ENCODE measurements at regions of chr11 and their contacts with region 1.

Region 1: DNA sequence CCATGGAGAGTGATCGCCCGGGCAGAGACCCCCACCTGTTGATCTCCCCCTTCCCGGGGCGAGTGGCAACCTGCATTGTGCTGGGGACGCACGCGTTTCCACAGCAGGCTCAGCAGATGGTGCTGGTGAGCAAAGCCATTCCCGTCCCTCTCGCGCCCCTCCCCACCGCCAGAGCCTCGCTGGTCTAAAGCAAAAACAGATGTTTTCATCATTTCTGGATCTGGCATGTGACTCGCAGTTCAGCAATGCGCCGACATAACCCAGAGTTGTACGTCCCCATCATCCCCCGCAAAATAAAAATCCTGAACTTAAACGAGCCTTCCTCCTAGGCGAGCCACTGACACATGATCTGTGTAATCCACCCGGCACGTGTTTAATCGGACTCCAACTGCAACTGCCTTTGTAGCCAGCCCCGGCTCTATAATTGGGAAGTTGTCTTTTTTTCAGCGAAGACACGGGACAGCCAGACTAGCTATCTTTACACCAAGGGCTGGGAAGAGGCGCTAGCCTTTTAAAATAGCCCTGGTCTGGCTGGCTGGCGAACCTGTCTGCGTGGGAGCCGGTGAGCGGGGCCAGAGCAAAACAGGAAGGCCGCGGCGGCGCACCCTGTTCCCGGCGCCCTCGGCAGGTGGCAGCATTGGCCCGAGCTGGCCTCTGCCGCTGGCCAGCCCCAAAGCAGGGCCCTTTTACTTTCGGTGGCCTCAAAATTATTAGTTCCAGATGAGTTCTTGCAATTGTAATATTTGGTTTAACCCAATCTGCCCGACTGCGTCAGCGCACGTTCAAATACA is 203.0 kb upstream of the SORL1-AS1 start:
- DNase-seq: peak; percentile 78
- H3K4me3 Mint-ChIP-seq: peak overlapping the region; percentile 68
- H3K27ac Mint-ChIP-seq: peak overlapping the region; percentile 49
- H3K4me1 Mint-ChIP-seq: peaks cover 26% of the 10 kb centered on the region
- H3K27me3 Mint-ChIP-seq: peaks cover 25% of the 10 kb centered on the region

Region 2: DNA sequence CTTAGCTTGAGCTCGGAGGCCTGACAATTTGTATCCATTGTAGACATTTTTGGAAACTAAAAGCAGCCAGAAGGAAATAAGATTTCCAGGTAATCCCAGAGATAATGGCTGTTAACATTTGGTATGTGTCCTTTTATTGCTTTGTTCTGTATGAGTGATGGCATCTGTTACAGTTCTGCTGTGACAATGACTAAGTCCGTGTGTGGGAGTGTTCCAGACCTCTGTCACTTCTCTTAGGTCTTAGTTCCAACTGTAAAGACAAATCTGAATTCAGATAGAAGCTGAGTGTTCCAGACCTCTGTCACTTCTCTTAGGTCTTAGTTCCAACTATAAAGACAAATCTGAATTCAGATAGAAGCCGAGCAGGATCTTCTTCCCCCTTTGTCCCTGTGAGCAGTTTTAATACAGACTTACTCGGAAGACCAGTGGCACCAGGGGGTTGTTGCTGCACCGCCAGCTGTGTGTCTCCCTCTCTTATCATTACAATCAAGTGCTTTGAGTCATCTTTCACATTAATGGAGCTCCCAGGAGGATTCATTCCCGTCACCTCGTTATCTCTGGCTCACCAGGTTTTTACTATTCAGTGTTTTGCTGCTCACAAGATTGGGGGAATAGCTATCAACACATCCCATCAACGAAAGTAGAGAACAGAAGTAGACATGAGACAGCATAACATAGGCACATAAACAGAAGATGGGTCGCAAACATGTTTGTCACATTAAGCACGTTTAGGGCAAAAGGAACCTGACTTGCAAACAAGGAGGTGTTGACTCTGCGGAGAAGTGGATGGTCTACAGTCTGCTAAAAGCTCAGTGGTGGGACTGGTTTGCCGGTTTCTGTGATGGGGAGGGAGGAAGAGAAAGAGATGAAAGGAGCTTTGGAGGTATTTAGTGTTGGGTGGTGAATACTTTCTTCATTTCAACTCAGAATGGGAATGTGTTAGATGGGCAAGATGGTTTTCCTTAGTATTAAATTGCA is 11.9 kb before region 1 on chr11:
- CTCF ChIA-PET with region 1: interaction called, 11 read pairs
- DNase-seq: no peak
- H3K4me3 Mint-ChIP-seq: no peak overlapping the region
- H3K27ac Mint-ChIP-seq: no peak overlapping the region
- H3K4me1 Mint-ChIP-seq: no peaks in the 10 kb centered on the region
- H3K27me3 Mint-ChIP-seq: no peaks in the 10 kb centered on the region

Region 3: DNA sequence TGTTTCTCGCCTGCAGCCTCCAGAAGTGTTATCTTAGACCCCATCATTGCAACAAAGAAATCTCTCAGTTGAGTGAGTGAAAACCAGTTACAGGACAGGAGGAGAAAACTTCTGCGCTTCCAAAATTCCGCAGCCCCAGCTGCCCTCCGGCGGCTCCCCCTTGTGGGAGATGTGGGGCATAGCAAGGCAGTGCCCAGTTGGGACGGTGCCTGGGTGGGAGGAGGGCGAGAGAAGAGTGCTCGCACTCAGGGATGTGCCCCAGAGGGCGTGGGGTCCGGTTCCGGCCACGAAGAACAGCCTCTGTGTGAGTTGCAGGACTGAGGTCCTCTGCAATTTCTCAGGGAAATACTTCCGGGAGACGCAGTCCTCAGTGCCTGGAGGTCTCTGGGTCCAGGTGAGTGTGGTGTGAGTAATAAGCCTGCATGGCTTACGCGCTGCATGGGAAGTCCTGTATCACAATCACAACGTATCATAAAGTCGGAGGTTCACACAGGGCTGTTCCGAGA is 547.3 kb after region 1 on chr11:
- CTCF ChIA-PET with region 1: interaction called, 18 read pairs
- DNase-seq: peak; percentile 57
- H3K4me3 Mint-ChIP-seq: no peak overlapping the region
- H3K27ac Mint-ChIP-seq: no peak overlapping the region
- H3K4me1 Mint-ChIP-seq: no peaks in the 10 kb centered on the region
- H3K27me3 Mint-ChIP-seq: peaks cover 18% of the 10 kb centered on the region

Region 4: DNA sequence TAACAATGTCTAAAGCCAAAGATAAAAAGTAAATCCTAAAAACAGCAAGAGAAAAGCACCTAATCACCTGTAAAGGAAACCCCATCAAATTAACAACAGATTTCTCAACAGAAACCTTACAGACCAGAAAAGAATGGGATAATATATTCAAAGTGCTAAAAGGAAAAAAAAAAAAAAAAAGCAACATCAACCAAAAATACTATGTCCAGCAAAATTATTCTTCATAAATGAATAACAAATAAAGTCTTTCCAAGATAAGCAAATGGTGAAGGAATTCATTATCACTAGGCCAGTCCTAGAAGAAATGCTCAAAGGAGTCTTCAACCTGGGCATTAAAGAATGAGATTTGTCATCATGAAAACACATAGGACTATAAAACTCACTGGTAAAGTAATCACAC is 807.8 kb after region 1 on chr11:
- CTCF ChIA-PET with region 1: no interaction called
- DNase-seq: no peak
- H3K4me3 Mint-ChIP-seq: no peak overlapping the region
- H3K27ac Mint-ChIP-seq: no peak overlapping the region
- H3K4me1 Mint-ChIP-seq: no peaks in the 10 kb centered on the region
- H3K27me3 Mint-ChIP-seq: no peaks in the 10 kb centered on the region